Thyroid gland (tissue), 4 donors: ENCODE measurements at regions of chr7 and their contacts with region 1.

Region 1: DNA sequence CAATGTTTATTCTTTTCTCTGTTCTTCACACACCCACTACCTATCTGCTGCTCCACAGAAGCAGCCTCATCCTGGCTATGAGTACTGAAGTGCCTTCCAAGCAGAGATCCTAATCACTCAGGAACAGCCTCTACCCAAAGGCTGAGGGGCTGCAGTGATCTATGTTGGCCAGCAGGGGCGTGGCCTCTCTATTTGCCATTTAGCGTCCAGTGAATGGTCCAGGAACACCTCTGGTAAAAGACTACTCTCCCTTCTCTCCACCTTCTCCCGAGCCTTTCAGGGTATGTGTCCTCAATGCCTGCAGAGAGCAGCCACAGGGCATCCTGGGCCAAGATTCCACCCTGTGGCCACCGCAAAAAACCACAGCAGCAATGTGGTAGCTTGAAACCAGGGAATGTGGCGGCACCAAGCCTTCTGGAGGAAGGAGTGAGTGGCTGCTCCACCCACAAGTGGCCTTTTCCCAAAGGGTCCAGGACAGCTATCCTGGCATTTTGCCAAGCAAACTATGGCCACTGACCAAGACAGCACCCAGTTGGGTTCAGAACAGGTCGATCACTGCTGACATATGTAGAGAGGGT is 70.9 kb downstream of the SYPL1 start:
- DNase-seq: peak; percentile 62 to 63
- H3K4me3 ChIP-seq: no peak overlapping the region
- H3K27ac ChIP-seq: no peak overlapping the region
- H3K4me1 ChIP-seq: peaks cover 4 to 8% of the 10 kb centered on the region in 2 donors
- H3K27me3 ChIP-seq: no peaks in the 10 kb centered on the region
- CTCF ChIP-seq: peak; percentile 56 to 86 (median 72)
- POLR2A ChIP-seq: no peak

Region 2: GRCh38 chr7:105759670-105760550 is 281.3 kb before region 1 on chr7:
- intact Hi-C with region 1: loop called (anchors 5 kb)
- DNase-seq: peak; percentile 43 to 49
- H3K4me3 ChIP-seq: no peak overlapping the region
- H3K27ac ChIP-seq: no peak overlapping the region
- H3K4me1 ChIP-seq: peaks cover 0 to 3% of the 10 kb centered on the region in 2 donors
- H3K27me3 ChIP-seq: no peaks in the 10 kb centered on the region
- CTCF ChIP-seq: peak in 4 of 6 experiments; percentile 23 to 59 (median 54)
- POLR2A ChIP-seq: no peak

Region 3: DNA sequence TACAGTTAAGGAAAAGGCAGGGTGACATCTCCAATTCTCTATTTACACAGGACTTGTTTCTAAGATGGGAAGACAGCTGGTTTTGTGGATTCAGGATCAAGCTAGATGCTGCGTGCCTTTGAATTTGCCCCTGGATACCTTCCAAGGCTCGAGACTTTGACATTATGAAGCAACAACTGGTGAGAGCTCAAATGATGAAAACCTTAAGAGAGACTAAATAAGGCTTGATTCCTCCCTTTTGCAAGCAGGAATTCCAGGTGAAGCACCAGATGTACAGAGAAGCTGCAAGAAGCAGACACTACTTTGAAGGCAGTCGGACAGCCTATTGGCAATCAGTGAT is 245.9 kb before region 1 on chr7:
- intact Hi-C with region 1: no loop called
- DNase-seq: no peak
- H3K4me3 ChIP-seq: no peak overlapping the region
- H3K27ac ChIP-seq: no peak overlapping the region
- H3K4me1 ChIP-seq: peaks cover 3 to 8% of the 10 kb centered on the region in 2 donors
- H3K27me3 ChIP-seq: no peaks in the 10 kb centered on the region
- CTCF ChIP-seq: no peak
- POLR2A ChIP-seq: no peak

Region 4: DNA sequence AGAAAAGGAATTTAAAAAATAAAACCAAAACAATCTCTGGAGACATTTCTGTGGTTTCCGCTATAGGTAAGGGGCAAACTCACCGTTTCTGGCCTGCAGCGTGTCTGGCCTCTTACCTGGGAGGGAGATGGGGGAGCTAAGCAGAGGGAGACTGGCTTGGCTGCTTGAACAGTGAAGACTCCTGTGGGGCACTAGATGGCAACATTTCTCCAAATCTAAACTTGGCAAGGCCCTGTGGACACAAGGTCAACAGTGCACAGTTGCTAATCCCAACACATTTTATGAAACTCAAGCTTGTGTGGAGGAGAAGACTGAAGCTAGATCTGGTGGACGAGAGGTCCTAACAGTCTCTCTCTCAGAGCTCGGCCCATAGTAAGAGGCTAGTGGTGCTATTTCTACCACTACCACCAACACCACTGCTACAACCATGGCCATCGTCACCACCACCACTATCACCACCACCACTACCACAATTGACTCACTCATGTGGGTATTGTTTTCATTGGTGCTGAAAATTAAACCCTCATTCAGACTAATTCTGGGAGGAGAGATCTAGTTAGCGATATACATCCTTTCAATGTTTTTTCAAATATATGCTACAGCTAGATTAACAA is 106.5 kb before region 1 on chr7:
- intact Hi-C with region 1: loop called (anchors 5 kb)
- DNase-seq: peak; percentile 72 to 75
- H3K4me3 ChIP-seq: no peak overlapping the region
- H3K27ac ChIP-seq: peak overlapping the region; percentile 49 to 76 (median 75)
- H3K4me1 ChIP-seq: peaks cover 20 to 35% of the 10 kb centered on the region in 2 donors
- H3K27me3 ChIP-seq: no peaks in the 10 kb centered on the region
- CTCF ChIP-seq: peak in 5 of 6 experiments; percentile 30 to 92 (median 81)
- POLR2A ChIP-seq: peak in 1 of 2 donors; percentile 16

Region 5: DNA sequence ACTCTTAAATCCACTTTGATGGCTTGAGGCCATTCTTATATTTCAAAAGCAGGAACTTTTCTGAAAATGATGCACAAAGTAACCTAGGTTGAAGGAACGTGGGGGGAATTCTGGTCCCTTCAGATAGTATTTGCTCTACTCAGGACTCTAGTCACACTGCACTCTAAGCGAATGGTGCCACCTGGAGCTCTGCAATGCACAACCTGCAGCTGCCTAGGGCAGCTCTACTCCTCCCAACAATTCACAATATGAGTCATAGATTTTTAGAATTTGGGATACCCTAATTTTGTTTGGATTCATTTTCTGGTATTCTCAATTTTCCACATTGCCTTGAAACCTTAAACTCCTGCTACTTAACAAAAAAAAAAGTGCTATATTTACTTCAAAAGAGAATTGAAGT is 53.6 kb after region 1 on chr7:
- intact Hi-C with region 1: no loop called
- DNase-seq: no peak
- H3K4me3 ChIP-seq: no peak overlapping the region
- H3K27ac ChIP-seq: no peak overlapping the region
- H3K4me1 ChIP-seq: peaks cover 0 to 9% of the 10 kb centered on the region in 2 donors
- H3K27me3 ChIP-seq: no peaks in the 10 kb centered on the region
- CTCF ChIP-seq: no peak
- POLR2A ChIP-seq: no peak